ENCODE measurements at regions of chr20 and their contacts with region 1.

Region 1: GRCh38 chr20:56629670-56630478 is 768 bp downstream of the TFAP2C start:
- DNase-seq: peak; percentile 88
- H3K4me3 Mint-ChIP-seq: peak overlapping the region; percentile 90
- H3K27ac Mint-ChIP-seq: peak overlapping the region; percentile 85
- H3K4me1 Mint-ChIP-seq: peaks cover 32% of the 10 kb centered on the region
- H3K27me3 Mint-ChIP-seq: no peaks in the 10 kb centered on the region
- CTCF ChIP-seq: peak; percentile 93

Region 2: GRCh38 chr20:56343861-56344381 is 286.0 kb before region 1 on chr20:
- CTCF ChIA-PET with region 1: no interaction called
- POLR2A ChIA-PET with region 1: no interaction called
- intact Hi-C with region 1: no loop called
- DNase-seq: no peak
- H3K4me3 Mint-ChIP-seq: no peak overlapping the region
- H3K27ac Mint-ChIP-seq: no peak overlapping the region
- H3K4me1 Mint-ChIP-seq: no peaks in the 10 kb centered on the region
- H3K27me3 Mint-ChIP-seq: peaks cover 25% of the 10 kb centered on the region
- CTCF ChIP-seq: peak; percentile 73

Region 3: DNA sequence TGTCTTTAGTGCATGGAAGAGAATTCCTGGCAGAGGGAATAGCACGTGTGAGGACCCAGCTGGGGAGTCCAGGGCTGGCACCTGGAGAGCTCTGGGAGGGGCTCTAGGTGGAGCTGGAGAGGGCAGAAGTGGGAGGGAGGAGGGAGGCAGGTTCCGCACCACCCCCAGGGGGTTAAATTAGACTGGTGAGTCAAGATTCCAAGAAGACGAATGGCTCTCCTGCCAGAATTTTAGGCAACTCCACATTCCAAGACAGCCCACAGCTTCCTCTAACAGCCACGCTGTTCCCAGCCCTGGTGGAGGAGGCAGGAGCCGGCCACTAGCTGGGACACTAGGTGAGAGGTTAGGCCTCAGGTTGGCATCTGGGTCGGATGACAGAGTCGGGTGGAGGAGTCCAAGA is 59.4 kb after region 1 on chr20:
- CTCF ChIA-PET with region 1: interaction called, 6 read pairs
- POLR2A ChIA-PET with region 1: interaction called, 28 read pairs
- intact Hi-C with region 1: no loop called
- DNase-seq: peak; percentile 96
- H3K4me3 Mint-ChIP-seq: peak overlapping the region; percentile 33
- H3K27ac Mint-ChIP-seq: peak overlapping the region; percentile 72
- H3K4me1 Mint-ChIP-seq: peaks cover 19% of the 10 kb centered on the region
- H3K27me3 Mint-ChIP-seq: no peaks in the 10 kb centered on the region
- CTCF ChIP-seq: no peak

Region 4: DNA sequence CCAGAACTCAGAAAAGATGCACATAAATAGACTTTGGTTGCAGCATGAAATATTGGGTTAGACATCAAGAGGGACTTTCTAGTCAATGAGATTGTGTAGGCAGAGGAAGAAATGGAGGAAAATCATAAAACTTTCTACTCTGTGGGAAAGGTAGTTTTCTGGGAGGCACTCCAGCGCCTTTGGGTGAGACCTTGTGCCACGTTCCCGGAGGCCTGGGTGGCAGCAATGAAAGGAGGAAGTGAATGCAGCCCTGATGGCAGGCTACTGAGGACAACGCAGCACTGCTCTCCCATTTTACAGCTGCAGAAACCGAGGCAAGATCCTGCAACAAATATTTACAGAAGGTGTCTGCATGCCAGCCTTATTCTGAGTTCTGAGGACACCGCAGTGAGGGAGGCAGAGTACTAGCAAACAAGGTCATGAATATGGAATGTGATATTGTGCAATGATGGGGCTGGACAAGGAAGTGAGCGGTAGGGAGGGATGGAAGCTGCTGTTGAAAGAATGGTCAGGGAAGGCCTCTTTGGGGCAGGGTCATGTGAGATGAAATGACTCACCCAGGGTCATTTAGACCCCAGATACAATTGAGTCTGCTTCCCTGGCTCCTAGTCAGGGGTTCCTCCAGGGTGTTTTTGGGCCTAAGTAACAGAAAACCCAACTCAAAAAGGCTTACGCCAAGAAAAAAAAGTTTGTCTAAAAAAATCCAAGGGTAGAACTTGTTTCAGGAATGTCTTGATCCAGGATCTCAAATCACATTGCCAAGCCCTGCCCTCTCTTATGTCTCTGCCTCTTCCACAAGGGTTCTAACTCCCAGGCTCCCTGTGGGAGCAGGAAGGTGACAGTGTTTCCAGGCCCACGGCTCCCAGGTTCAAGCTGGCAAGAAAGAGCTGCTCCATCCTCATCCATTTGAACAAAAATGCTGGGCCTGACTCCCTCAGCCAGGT is 158.4 kb after region 1 on chr20:
- CTCF ChIA-PET with region 1: interaction called, 12 read pairs
- POLR2A ChIA-PET with region 1: interaction called, 27 read pairs
- intact Hi-C with region 1: loop called (anchors 1 kb)
- DNase-seq: peak; percentile 97
- H3K4me3 Mint-ChIP-seq: peak overlapping the region; percentile 67
- H3K27ac Mint-ChIP-seq: peak overlapping the region; percentile 98
- H3K4me1 Mint-ChIP-seq: peaks cover 32% of the 10 kb centered on the region
- H3K27me3 Mint-ChIP-seq: no peaks in the 10 kb centered on the region
- CTCF ChIP-seq: no peak

Region 5: DNA sequence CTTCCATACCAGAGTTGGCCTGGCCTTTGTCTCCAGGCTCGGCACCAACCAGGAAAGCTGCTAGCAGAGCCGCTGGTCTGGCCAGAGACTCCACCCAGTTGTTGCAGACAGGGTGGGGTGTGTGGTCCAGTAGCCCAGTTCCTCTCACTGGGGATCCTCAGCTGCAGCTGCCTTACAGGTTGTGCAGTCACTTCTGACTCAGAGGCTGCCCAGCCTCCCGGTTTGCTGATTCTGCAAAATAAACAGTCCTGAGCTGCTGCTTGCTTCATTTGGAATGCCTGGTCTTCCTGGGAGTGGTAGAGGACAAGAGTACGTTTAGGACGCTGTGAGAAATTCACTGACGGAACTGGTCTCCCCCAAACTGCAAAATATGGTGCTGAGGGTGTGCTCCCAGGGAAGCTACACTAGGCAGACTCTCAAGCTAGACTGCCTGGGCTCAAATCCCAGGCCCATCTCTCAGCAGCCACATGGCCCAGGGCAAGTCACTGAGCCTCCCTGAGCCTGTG is 245.2 kb after region 1 on chr20:
- CTCF ChIA-PET with region 1: interaction called, 5 read pairs
- POLR2A ChIA-PET with region 1: interaction called, 5 read pairs
- intact Hi-C with region 1: loop called (anchors 1 kb)
- DNase-seq: peak; percentile 93
- H3K4me3 Mint-ChIP-seq: no peak overlapping the region
- H3K27ac Mint-ChIP-seq: peak overlapping the region; percentile 72
- H3K4me1 Mint-ChIP-seq: peaks cover 7% of the 10 kb centered on the region
- H3K27me3 Mint-ChIP-seq: no peaks in the 10 kb centered on the region
- CTCF ChIP-seq: no peak

Region 6: GRCh38 chr20:56974499-56975236 is 344.8 kb after region 1 on chr20:
- CTCF ChIA-PET with region 1: interaction called, 121 read pairs
- POLR2A ChIA-PET with region 1: interaction called, 71 read pairs
- intact Hi-C with region 1: loop called (anchors 1 kb)
- DNase-seq: peak; percentile 82
- H3K4me3 Mint-ChIP-seq: no peak overlapping the region
- H3K27ac Mint-ChIP-seq: no peak overlapping the region
- H3K4me1 Mint-ChIP-seq: no peaks in the 10 kb centered on the region
- H3K27me3 Mint-ChIP-seq: peaks cover 31% of the 10 kb centered on the region
- CTCF ChIP-seq: peak; percentile 80

Region 7: GRCh38 chr20:57048027-57048869 is 418.4 kb after region 1 on chr20:
- CTCF ChIA-PET with region 1: interaction called, 4 read pairs
- POLR2A ChIA-PET with region 1: interaction called, 35 read pairs
- intact Hi-C with region 1: loop called (anchors 10 kb)
- DNase-seq: peak; percentile 85
- H3K4me3 Mint-ChIP-seq: no peak overlapping the region
- H3K27ac Mint-ChIP-seq: no peak overlapping the region
- H3K4me1 Mint-ChIP-seq: peaks cover 8% of the 10 kb centered on the region
- H3K27me3 Mint-ChIP-seq: no peaks in the 10 kb centered on the region
- CTCF ChIP-seq: peak; percentile 55

Region 8: GRCh38 chr20:57080788-57081187 is 450.9 kb after region 1 on chr20:
- CTCF ChIA-PET with region 1: interaction called, 6 read pairs
- POLR2A ChIA-PET with region 1: no interaction called
- intact Hi-C with region 1: loop called (anchors 1 kb)
- DNase-seq: peak; percentile 32
- H3K4me3 Mint-ChIP-seq: no peak overlapping the region
- H3K27ac Mint-ChIP-seq: no peak overlapping the region
- H3K4me1 Mint-ChIP-seq: peaks cover 15% of the 10 kb centered on the region
- H3K27me3 Mint-ChIP-seq: peaks cover 18% of the 10 kb centered on the region
- CTCF ChIP-seq: peak; percentile 27

Measured in MCF 10A (cell line).